ENCODE measurements at regions of chr7 and their contacts with region 1.

Region 1: GRCh38 chr7:131546583-131547111 is 9.8 kb downstream of the PODXL start:
- DNase-seq: peak; percentile 57
- H3K4me3 Mint-ChIP-seq: no peak overlapping the region
- H3K27ac Mint-ChIP-seq: no peak overlapping the region
- H3K4me1 Mint-ChIP-seq: peaks cover 13% of the 10 kb centered on the region
- H3K27me3 Mint-ChIP-seq: peaks cover 4% of the 10 kb centered on the region

Region 2: DNA sequence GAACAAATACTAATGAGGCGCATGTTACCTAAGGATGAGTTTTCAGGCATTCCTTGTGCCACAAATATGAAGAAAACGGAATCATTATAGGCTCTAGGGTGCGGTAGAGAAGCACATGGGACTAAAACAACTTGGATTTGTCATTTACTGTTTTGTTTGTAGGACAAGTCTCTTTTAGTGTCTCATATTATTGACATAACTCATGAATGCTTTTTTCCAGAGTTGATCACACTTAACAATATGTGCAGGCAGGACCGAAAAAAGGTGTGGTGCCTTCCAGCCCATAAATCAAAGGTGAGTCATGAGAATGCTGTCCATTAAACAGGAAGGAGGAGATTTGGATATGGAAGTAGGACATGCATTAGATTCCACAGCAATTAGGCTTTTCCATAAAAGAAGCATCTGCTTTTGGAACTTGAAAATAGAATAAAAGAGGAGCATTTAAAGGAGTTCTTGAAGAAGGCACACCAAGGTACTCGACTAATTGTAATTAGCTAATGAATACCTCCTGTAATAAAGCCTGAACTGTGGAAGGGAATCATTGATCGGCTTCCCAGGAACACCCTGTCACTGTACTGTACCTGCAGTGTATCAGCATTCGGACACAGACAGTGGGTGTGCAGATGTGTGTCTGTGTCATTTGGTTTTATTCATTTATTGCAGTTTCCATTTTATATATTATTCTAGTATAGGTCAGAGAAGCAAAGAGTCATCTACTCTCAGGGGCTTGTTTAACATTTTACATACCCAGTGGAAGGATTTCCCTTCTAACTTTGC is 693.0 kb before region 1 on chr7:
- CTCF ChIA-PET with region 1: no interaction called
- POLR2A ChIA-PET with region 1: no interaction called
- DNase-seq: no peak
- H3K4me3 Mint-ChIP-seq: no peak overlapping the region
- H3K27ac Mint-ChIP-seq: no peak overlapping the region
- H3K4me1 Mint-ChIP-seq: no peaks in the 10 kb centered on the region
- H3K27me3 Mint-ChIP-seq: no peaks in the 10 kb centered on the region

Region 3: DNA sequence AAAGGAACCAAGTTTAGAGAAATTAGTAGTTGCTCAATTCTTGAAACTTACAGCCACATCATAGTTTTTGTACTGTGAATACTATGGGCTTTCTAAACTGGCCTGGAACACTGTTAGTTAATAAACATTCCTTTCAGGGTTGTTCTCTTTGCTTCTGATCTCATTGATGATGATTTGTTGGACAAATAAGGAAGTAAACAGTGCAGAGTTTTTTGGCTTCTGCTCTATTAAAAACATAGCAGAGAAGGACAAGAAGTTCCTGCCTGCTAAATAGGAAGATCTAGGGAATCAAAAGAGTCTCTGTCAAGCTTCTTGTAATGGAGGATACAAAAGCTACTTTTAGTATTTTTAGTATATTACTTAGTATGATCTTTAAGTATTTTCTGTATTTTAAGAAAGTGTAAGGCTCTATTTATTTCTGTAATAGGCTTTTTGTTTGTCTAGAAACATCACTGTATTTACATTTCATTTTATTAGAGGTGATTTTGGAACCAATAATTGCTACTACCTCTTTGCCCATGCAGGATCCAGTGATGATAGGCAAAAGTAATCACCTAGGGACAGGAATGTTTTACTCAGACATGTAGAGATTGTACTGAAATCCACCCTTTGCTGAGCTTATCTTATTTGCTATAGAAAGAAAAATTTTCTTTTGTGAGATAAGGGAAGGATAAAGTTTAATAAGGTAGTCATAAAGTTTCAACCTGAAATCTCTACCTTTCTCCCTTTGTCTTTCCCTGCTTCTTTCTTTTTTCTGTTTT is 145.6 kb before region 1 on chr7:
- CTCF ChIA-PET with region 1: no interaction called
- POLR2A ChIA-PET with region 1: no interaction called
- DNase-seq: no peak
- H3K4me3 Mint-ChIP-seq: no peak overlapping the region
- H3K27ac Mint-ChIP-seq: no peak overlapping the region
- H3K4me1 Mint-ChIP-seq: peaks cover 2% of the 10 kb centered on the region
- H3K27me3 Mint-ChIP-seq: no peaks in the 10 kb centered on the region

Region 4: GRCh38 chr7:131507592-131508331 is 38.9 kb before region 1 on chr7:
- CTCF ChIA-PET with region 1: interaction called, 12 read pairs
- POLR2A ChIA-PET with region 1: interaction called, 4 read pairs
- DNase-seq: peak; percentile 83
- H3K4me3 Mint-ChIP-seq: no peak overlapping the region
- H3K27ac Mint-ChIP-seq: no peak overlapping the region
- H3K4me1 Mint-ChIP-seq: peaks cover 24% of the 10 kb centered on the region
- H3K27me3 Mint-ChIP-seq: no peaks in the 10 kb centered on the region

Region 5: GRCh38 chr7:131633342-131633843 is 86.7 kb after region 1 on chr7:
- CTCF ChIA-PET with region 1: no interaction called
- POLR2A ChIA-PET with region 1: no interaction called
- DNase-seq: no peak
- H3K4me3 Mint-ChIP-seq: no peak overlapping the region
- H3K27ac Mint-ChIP-seq: no peak overlapping the region
- H3K4me1 Mint-ChIP-seq: no peaks in the 10 kb centered on the region
- H3K27me3 Mint-ChIP-seq: peaks cover 2% of the 10 kb centered on the region

Region 6: GRCh38 chr7:131649003-131649541 is 102.4 kb after region 1 on chr7:
- CTCF ChIA-PET with region 1: no interaction called
- POLR2A ChIA-PET with region 1: no interaction called
- DNase-seq: no peak
- H3K4me3 Mint-ChIP-seq: no peak overlapping the region
- H3K27ac Mint-ChIP-seq: no peak overlapping the region
- H3K4me1 Mint-ChIP-seq: no peaks in the 10 kb centered on the region
- H3K27me3 Mint-ChIP-seq: peaks cover 4% of the 10 kb centered on the region

Measured in activated CD4-positive, alpha-beta T cell treated with anti-CD3 and anti-CD28 coated beads, Interleukin-2, amount 10 ng/mL, durations not matched to agents 7 days and 5 days (primary cell).